Dorsolateral prefrontal cortex (tissue), 120 donors: ENCODE measurements at regions of chr2 and their contacts with region 1.

Region 1: GRCh38 chr2:231359948-231360347 is 35.6 kb upstream of the B3GNT7 start:
- DNase-seq: peak in 1 of 10 donors; percentile 37
- H3K4me3 ChIP-seq: no peak overlapping the region
- H3K27ac ChIP-seq: peak overlapping the region in 19 of 59 donors; percentile 1 to 68 (median 28)
- H3K27me3 ChIP-seq: no peaks in the 10 kb centered on the region
- CTCF ChIP-seq: no peak

Region 2: GRCh38 chr2:231270221-231271114 is 89.5 kb before region 1 on chr2:
- intact Hi-C with region 1: no loop called
- DNase-seq: no peak
- H3K4me3 ChIP-seq: no peak overlapping the region
- H3K27ac ChIP-seq: peak overlapping the region in 1 of 59 donors; percentile 11
- H3K27me3 ChIP-seq: no peaks in the 10 kb centered on the region
- CTCF ChIP-seq: no peak

Region 3: DNA sequence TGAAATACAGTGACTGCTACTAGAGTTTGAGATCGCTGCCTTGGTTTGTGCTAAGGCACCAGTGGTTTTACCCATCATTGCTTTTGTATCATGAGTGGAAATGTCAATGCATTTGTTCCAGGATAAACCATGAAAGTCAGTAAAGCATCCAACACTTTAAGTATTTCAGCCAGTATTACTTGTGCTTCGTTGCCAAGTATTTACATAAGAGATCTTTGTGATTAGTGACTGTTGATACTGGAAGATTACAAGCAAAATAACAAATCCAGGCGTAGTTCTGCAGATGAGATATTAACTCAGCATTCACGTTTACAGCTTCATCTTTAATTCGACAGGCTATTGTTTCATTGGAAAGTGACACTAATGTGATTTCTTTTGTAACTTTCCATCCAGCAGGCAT is 54.7 kb before region 1 on chr2:
- intact Hi-C with region 1: loop called in 1 of 2 experiments (anchors 2 kb)
- DNase-seq: no peak
- H3K4me3 ChIP-seq: no peak overlapping the region
- H3K27ac ChIP-seq: no peak overlapping the region
- H3K27me3 ChIP-seq: no peaks in the 10 kb centered on the region
- CTCF ChIP-seq: no peak